ENCODE measurements at regions of chr12 and their contacts with region 1.

Region 1: GRCh38 chr12:63668028-63668799 is at the start of gene DPY19L2:
- DNase-seq: peak; percentile 90
- total RNA-seq, gene DPY19L2: 67.7 TPM

Region 2: DNA sequence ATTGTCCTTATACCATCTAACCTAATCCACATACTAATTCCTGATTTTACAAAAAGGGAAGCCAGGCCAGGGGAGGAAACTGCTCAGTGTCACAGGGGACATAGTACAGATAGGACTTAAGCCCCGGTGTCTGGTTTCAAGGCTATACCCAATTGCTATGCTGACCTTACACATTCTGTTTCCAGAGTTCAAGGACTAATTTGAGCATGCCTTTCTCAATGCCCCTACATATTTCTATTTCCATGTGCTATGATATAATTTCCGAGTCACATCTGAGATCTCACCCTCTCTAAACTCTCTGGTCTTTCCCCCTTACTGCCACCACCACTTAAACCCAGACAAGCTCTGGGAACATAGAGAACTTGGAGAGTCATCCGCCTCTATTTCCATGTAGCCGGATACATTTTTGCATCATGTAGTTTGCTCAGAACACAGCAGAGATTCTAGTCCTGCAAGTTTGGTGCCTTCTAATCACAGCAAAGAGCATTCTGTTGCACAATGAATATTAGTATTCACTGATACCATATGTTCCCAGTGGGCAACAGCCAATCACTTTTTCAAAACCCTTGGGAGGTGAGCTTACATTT is 767.4 kb before region 1 on chr12:
- intact Hi-C with region 1: no loop called
- DNase-seq: no peak

Region 3: DNA sequence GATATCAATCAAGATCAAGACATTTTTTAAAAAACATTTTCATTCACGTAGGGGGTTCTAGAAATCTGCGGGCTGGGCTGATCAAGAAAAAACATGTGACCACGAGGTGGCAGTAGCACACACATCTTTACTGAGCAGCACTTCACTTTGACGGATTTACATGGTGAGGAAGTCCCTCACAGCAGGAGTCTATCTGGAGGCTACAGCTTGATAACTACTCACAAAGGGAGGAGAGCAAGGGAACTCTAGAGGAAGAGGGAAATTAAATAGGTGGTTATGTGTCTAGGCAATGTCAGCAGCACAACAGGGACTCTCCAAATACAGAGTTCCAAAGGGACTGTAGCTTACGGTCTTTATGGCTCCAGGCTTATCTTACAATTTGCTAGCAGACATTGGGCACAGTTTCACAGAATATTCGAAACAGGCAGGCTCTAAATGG is 248.0 kb before region 1 on chr12:
- intact Hi-C with region 1: loop called (anchors 10 kb)
- DNase-seq: no peak

Region 4: DNA sequence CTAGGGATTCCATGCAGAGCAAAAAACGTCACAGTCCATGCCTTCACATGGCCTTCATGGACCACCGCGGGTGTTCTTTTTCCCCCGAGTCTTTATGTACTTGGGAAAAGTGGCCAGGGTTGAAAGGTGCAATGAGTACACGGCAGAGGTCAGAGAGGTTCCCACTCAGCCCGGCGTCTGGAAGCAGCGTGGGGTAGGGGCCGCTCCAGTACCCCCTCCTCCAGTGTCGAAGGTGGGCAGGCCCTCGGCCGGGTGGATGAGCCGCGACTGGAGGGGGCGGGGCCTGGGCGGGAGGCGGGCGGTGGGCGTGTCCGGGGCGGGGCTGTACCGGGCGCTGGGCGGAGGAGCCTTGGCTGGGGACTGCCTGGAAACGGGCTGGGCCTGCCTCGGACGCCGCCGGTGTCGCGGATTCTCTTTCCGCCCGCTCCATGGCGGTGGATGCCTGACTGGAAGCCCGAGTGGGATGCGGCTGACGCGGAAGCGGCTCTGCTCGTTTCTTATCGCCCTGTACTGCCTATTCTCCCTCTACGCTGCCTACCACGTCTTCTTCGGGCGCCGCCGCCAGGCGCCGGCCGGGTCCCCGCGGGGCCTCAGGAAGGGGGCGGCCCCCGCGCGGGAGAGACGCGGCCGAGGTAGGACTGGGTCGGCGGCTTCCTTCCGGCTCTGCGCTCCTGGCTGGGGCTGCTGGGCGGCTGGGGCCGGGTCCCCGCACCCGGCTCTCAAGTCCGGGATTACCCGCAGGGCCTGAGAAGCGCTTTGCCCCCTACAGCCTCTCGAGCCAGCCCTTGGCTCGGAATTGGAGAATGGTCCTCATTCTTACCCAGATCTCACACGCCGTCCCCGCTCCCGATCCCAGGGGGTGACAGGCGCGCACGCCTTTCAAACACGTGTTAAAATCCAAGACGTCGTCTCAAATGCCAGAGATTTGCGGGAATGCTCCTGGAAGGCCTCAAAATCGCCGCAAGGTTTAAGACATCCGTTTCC is 111.6 kb after region 1 on chr12 and contains the start of gene RXYLT1:
- intact Hi-C with region 1: loop called (anchors 10 kb)
- DNase-seq: peak; percentile 95
- total RNA-seq, gene RXYLT1: 22.5 TPM

Region 5: GRCh38 chr12:63802012-63802608 is 133.9 kb after region 1 on chr12:
- intact Hi-C with region 1: loop called (anchors 10 kb)
- DNase-seq: no peak

Region 6: DNA sequence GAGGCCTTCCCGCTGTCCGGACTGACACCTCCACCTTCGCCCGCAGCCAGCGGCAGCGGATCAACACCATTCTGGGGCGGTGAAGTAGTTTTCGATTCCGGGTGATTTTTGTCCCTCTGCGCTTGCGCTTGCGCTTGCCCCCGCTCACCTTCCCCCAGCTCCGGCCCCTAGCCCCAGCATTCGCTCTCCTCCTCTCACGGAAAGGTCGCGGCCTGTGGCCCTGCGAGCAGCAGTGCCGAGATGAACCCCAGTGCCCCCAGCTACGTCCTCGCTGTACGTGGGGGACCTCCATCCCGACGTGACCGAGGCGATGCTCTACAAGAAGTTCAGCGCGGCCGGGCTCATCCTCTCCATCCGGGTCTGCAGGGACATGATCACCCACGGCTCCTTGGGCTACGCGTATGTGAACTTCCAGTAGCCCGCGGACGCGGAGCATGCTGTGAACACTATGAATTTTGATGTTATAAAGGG is 153.6 kb after region 1 on chr12:
- intact Hi-C with region 1: no loop called
- DNase-seq: no peak

Region 7: GRCh38 chr12:64931981-64932380 is 1263.8 kb after region 1 on chr12:
- intact Hi-C with region 1: no loop called
- DNase-seq: no peak